ENCODE measurements at regions of chr5 and their contacts with region 1.

Region 1: GRCh38 chr5:179839328-179840256 is 18.9 kb downstream of the SQSTM1 start:
- DNase-seq: no peak
- H3K4me3 ChIP-seq: no peak overlapping the region
- H3K27ac ChIP-seq: no peak overlapping the region
- H3K4me1 ChIP-seq: peaks cover 0 to 8% (median 3%) of the 10 kb centered on the region in 4 donors
- H3K27me3 ChIP-seq: no peaks in the 10 kb centered on the region
- CTCF ChIP-seq: no peak
- EP300 ChIP-seq: no peak
- POLR2A ChIP-seq: no peak

Region 2: GRCh38 chr5:178476972-178477754 is 1362.4 kb before region 1 on chr5:
- in situ Hi-C with region 1: no loop called
- intact Hi-C with region 1: loop called (anchors 5 kb)
- DNase-seq: no peak
- H3K4me3 ChIP-seq: no peak overlapping the region
- H3K27ac ChIP-seq: peak overlapping the region in 3 of 4 donors; percentile 22 to 50 (median 28)
- H3K4me1 ChIP-seq: no peaks in the 10 kb centered on the region
- H3K27me3 ChIP-seq: no peaks in the 10 kb centered on the region
- CTCF ChIP-seq: no peak
- EP300 ChIP-seq: no peak
- POLR2A ChIP-seq: no peak

Region 3: GRCh38 chr5:179470201-179470600 is 369.4 kb before region 1 on chr5:
- in situ Hi-C with region 1: no loop called
- intact Hi-C with region 1: no loop called
- DNase-seq: no peak
- H3K4me3 ChIP-seq: no peak overlapping the region
- H3K27ac ChIP-seq: no peak overlapping the region
- H3K4me1 ChIP-seq: no peaks in the 10 kb centered on the region
- H3K27me3 ChIP-seq: no peaks in the 10 kb centered on the region
- CTCF ChIP-seq: no peak
- EP300 ChIP-seq: no peak
- POLR2A ChIP-seq: no peak

Measured in transverse colon (tissue), 4 donors.